ENCODE measurements at regions of chr5 and their contacts with region 1.

Region 1: GRCh38 chr5:138737494-138738265 is 15.5 kb upstream of the CTNNA1 start:
- DNase-seq: no peak
- H3K4me3 Mint-ChIP-seq: no peak overlapping the region
- H3K27ac Mint-ChIP-seq: no peak overlapping the region
- H3K4me1 Mint-ChIP-seq: peaks cover 29% of the 10 kb centered on the region
- H3K27me3 Mint-ChIP-seq: peaks cover 22% of the 10 kb centered on the region

Region 2: GRCh38 chr5:138601444-138601843 is 136.2 kb before region 1 on chr5:
- intact Hi-C with region 1: loop called (anchors 5 kb)
- DNase-seq: no peak
- H3K4me3 Mint-ChIP-seq: no peak overlapping the region
- H3K27ac Mint-ChIP-seq: no peak overlapping the region
- H3K4me1 Mint-ChIP-seq: peaks cover 20% of the 10 kb centered on the region
- H3K27me3 Mint-ChIP-seq: peaks cover 74% of the 10 kb centered on the region

Region 3: DNA sequence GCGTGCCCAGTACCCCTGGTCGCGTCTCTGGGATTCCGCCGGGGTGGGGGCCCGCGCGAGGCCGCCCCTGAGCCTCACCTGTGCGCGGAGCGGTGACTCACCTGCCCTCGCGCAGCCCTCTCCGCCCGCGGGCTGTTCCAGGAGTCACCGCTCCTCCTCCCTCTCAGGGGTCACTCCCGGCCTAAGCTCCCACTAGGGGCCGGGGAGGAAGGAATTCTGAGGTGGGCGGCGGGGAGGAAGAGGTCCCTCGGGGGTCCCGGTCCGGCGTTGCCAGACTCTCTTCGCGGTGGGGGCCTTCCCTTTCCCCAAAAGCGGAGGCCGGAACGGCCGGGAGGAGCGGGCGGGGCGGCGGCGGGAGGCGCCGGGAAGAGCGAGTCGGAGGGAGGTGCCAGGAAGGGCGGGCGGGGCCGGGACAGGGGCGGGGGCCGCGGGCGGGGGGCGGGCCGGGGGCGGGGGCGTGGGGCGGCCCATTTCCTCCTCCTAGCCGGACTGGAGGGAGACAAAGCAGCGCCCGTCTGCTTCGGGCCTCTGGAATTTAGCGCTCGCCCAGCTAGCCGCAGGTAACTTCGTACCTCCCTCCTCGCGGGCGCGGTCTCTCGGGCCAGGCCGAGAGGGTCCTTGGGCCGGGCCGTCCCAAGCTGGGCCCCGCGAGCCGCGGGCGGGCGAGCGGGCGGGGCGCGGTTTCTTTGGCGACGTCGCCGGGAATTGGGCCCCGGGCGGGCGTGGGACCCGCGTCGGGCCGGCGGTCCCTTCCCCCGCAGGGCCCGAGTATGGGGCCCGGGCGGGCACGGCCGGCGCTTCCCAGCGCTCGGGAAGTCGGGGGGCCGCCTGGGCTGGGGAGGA is 15.5 kb after region 1 on chr5 and contains the start of gene CTNNA1:
- intact Hi-C with region 1: loop called (anchors 1 kb)
- DNase-seq: peak; percentile 48
- H3K4me3 Mint-ChIP-seq: peak within 1 kb of the TSS; percentile 86
- H3K27ac Mint-ChIP-seq: peak within 1 kb of the TSS; percentile 56
- H3K4me1 Mint-ChIP-seq: peaks cover 37% of the 10 kb centered on the region
- H3K27me3 Mint-ChIP-seq: peaks cover 22% of the 10 kb centered on the region
- total RNA-seq, gene CTNNA1: 56.6 and 58.0 TPM in 2 replicates